Right lobe of liver (tissue), 6 donors: ENCODE measurements at regions of chr4 and their contacts with region 1.

Region 1: GRCh38 chr4:15738877-15739276 is 36.0 kb downstream of the BST1 start:
- DNase-seq: no peak
- ATAC-seq: no peak
- H3K4me3 ChIP-seq: no peak overlapping the region
- H3K27ac ChIP-seq: no peak overlapping the region
- H3K4me1 ChIP-seq: peaks cover 0 to 14% (median 4%) of the 10 kb centered on the region in 4 donors
- H3K27me3 ChIP-seq: no peaks in the 10 kb centered on the region
- CTCF ChIP-seq: no peak
- POLR2A ChIP-seq: no peak

Region 2: GRCh38 chr4:15781427-15782095 is 42.7 kb after region 1 on chr4:
- intact Hi-C with region 1: no loop called
- DNase-seq: no peak
- ATAC-seq: no peak
- H3K4me3 ChIP-seq: no peak overlapping the region
- H3K27ac ChIP-seq: peak overlapping the region in 1 of 3 donors; percentile 4
- H3K4me1 ChIP-seq: no peaks in the 10 kb centered on the region
- H3K27me3 ChIP-seq: no peaks in the 10 kb centered on the region
- CTCF ChIP-seq: no peak
- POLR2A ChIP-seq: no peak

Region 3: GRCh38 chr4:15882675-15883086 is 143.8 kb after region 1 on chr4:
- intact Hi-C with region 1: no loop called
- DNase-seq: peak in 2 of 3 donors; percentile 28 to 62
- ATAC-seq: peak; percentile 97 to 98 (median 98)
- H3K4me3 ChIP-seq: no peak overlapping the region
- H3K27ac ChIP-seq: no peak overlapping the region
- H3K4me1 ChIP-seq: no peaks in the 10 kb centered on the region
- H3K27me3 ChIP-seq: no peaks in the 10 kb centered on the region
- CTCF ChIP-seq: peak; percentile 86 to 92 (median 90)
- POLR2A ChIP-seq: no peak

Region 4: GRCh38 chr4:15996773-15997172 is 257.9 kb after region 1 on chr4:
- intact Hi-C with region 1: loop called in 1 of 2 experiments (anchors 5 kb)
- DNase-seq: no peak
- ATAC-seq: no peak
- H3K4me3 ChIP-seq: no peak overlapping the region
- H3K27ac ChIP-seq: no peak overlapping the region
- H3K4me1 ChIP-seq: peaks cover 0 to 3% (median 0%) of the 10 kb centered on the region in 4 donors
- H3K27me3 ChIP-seq: no peaks in the 10 kb centered on the region
- CTCF ChIP-seq: no peak
- POLR2A ChIP-seq: no peak